CD14-positive monocyte (primary cell): ENCODE measurements at regions of chr17 and their contacts with region 1.

Region 1: DNA sequence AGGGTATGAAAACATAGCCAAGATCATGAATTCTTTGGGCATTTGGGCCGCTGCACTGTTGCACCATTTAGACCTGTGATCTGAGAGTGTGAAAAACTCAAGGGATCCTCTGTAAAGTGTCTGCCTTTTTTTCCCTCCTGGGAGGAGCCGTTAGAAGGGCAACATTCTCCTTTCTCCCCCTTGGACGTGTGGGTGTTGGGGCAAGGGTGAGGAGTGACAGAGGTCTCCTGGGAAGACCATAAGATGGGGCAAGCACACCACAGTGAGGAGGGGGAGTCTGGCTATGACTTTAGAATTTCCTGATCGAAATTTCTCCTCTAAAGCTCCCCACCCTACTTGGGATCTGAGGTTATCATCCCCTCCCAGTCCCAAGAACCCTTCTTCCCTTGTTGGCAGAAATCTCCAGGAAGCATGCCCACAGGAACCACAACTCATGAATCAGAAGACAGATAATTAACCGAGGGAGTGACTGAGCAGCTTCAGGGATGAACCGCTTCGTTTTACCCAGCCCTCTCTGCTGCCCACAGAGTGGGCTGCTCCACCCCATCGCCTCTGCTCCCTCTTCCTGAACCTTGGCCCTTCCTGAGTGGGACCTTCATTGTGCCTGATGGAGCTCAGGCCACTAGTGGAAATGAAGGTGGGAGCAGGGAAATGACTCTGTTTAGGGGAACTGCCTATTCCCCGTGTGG is 4.2 kb downstream of the ITGB3 start:
- DNase-seq: no peak
- H3K4me3 ChIP-seq: no peak overlapping the region
- H3K4me3 Mint-ChIP-seq: peak overlapping the region in 1 of 2 donors; percentile 65
- H3K27ac ChIP-seq: no peak overlapping the region
- H3K27ac Mint-ChIP-seq: no peak overlapping the region
- H3K4me1 ChIP-seq: peaks cover 9 to 15% of the 10 kb centered on the region in 2 donors
- H3K4me1 Mint-ChIP-seq: peaks cover 25% of the 10 kb centered on the region
- H3K27me3 ChIP-seq: peaks cover 44 to 54% of the 10 kb centered on the region in 2 donors
- H3K27me3 Mint-ChIP-seq: peaks cover 51 to 70% (median 57%) of the 10 kb centered on the region in 3 donors
- CTCF ChIP-seq: no peak

Region 2: GRCh38 chr17:47295062-47295845 is 37.5 kb after region 1 on chr17:
- intact Hi-C with region 1: loop called in 1 of 2 experiments (anchors 5 kb)
- DNase-seq: no peak
- H3K4me3 ChIP-seq: no peak overlapping the region
- H3K4me3 Mint-ChIP-seq: no peak overlapping the region
- H3K27ac ChIP-seq: no peak overlapping the region
- H3K27ac Mint-ChIP-seq: no peak overlapping the region
- H3K4me1 ChIP-seq: no peaks in the 10 kb centered on the region
- H3K4me1 Mint-ChIP-seq: peaks cover 7% of the 10 kb centered on the region
- H3K27me3 ChIP-seq: no peaks in the 10 kb centered on the region
- H3K27me3 Mint-ChIP-seq: peaks cover 1 to 5% (median 2%) of the 10 kb centered on the region in 3 donors
- CTCF ChIP-seq: no peak

Region 3: DNA sequence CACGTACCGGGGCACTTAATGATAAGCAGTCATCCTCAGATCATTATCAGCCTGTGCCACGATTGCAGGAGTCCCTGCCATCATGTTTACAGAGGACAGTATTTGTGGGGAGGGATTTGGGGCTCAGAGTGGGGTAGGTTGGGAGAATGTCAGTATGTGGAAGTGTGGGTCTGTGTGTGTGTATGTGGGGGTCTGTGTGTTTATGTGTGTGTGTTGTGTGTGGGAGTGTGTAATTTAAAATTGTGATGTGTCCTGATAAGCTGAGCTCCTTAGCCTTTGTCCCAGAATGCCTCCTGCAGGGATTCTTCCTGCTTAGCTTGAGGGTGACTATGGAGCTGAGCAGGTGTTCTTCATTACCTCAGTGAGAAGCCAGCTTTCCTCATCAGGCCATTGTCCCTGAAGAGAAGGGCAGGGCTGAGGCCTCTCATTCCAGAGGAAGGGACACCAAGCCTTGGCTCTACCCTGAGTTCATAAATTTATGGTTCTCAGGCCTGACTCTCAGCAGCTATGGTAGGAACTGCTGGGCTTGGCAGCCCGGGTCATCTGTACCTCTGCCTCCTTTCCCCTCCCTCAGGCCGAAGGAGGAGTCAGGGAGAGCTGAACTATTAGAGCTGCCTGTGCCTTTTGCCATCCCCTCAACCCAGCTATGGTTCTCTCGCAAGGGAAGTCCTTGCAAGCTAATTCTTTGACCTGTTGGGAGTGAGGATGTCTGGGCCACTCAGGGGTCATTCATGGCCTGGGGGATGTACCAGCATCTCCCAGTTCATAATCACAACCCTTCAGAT is 52.6 kb after region 1 on chr17:
- intact Hi-C with region 1: loop called in 1 of 2 experiments (anchors 5 kb)
- DNase-seq: no peak
- H3K4me3 ChIP-seq: no peak overlapping the region
- H3K4me3 Mint-ChIP-seq: no peak overlapping the region
- H3K27ac ChIP-seq: no peak overlapping the region
- H3K27ac Mint-ChIP-seq: no peak overlapping the region
- H3K4me1 ChIP-seq: no peaks in the 10 kb centered on the region
- H3K4me1 Mint-ChIP-seq: no peaks in the 10 kb centered on the region
- H3K27me3 ChIP-seq: no peaks in the 10 kb centered on the region
- H3K27me3 Mint-ChIP-seq: peaks cover 0 to 5% (median 1%) of the 10 kb centered on the region in 3 donors
- CTCF ChIP-seq: no peak